Activated CD8-positive, alpha-beta T cell treated with anti-CD3 and anti-CD28 coated beads, Interleukin-2, amount 10 ng/mL, durations not matched to agents 7 days and 5 days (primary cell): ENCODE measurements at regions of chr1 and their contacts with region 1.

Region 1: GRCh38 chr1:42777852-42778251 is 6.9 kb upstream of the TMEM269 start:
- DNase-seq: peak; percentile 44
- ATAC-seq: peak; percentile 47
- H3K4me3 Mint-ChIP-seq: no peak overlapping the region
- H3K27ac Mint-ChIP-seq: peak overlapping the region; percentile 53
- H3K4me1 Mint-ChIP-seq: peaks cover 36% of the 10 kb centered on the region
- H3K27me3 Mint-ChIP-seq: no peaks in the 10 kb centered on the region

Region 2: GRCh38 chr1:42913426-42914091 is 135.7 kb after region 1 on chr1:
- CTCF ChIA-PET with region 1: interaction called, 41 read pairs
- POLR2A ChIA-PET with region 1: no interaction called
- DNase-seq: peak; percentile 77
- ATAC-seq: peak; percentile 76
- H3K4me3 Mint-ChIP-seq: no peak overlapping the region
- H3K27ac Mint-ChIP-seq: no peak overlapping the region
- H3K4me1 Mint-ChIP-seq: peaks cover 12% of the 10 kb centered on the region
- H3K27me3 Mint-ChIP-seq: peaks cover 8% of the 10 kb centered on the region